Heart left ventricle (tissue), 16 donors: ENCODE measurements at regions of chr4 and their contacts with region 1.

Region 1: GRCh38 chr4:55125087-55125721 is at the start of gene KDR:
- DNase-seq: peak; percentile 49 to 76 (median 69)
- ATAC-seq: peak; percentile 75 to 96 (median 92)
- H3K4me3 ChIP-seq: peak within 1 kb of the TSS; percentile 45 to 87 (median 74)
- H3K27ac ChIP-seq: peak within 1 kb of the TSS; percentile 22 to 86 (median 74)
- H3K4me1 ChIP-seq: peaks cover 0 to 19% (median 5%) of the 10 kb centered on the region in 12 donors
- H3K27me3 ChIP-seq: peaks cover 0 to 28% (median 13%) of the 10 kb centered on the region in 9 donors
- CTCF ChIP-seq: no peak
- POLR2A ChIP-seq: peak in 1 of 2 donors; percentile 94
- total RNA-seq, gene KDR: 13.4 to 51.0 (median 34.5) TPM

Region 2: DNA sequence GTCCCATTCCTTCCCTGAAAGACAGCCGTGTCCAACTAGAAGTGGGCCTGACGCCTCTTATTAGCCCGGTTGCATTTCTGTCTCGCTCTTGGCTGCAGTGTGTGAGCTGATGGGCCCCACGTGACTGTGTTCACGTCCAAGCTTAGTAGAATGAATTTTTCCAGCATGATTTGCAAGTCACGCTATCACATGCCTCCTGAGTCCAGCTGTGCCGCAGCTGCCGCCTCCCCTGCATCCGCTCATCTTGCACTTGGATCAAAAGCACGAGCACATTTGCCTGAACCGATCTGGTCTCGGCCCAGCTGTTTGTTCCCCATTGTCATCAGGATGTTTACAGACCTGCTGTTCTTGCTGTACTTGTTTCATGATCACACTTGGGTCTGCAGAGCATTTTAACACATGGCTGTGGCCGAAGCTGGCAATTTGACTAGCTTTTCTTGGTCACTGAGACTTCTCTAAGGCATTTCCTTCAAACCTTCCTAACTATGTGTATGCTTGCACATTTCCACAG is 341.0 kb before region 1 on chr4:
- intact Hi-C with region 1: no loop called
- DNase-seq: peak; percentile 88 to 93 (median 88)
- ATAC-seq: peak; percentile 94 to 95 (median 94)
- H3K4me3 ChIP-seq: peak overlapping the region in 5 of 12 donors; percentile 2 to 20 (median 12)
- H3K27ac ChIP-seq: peak overlapping the region in 11 of 12 donors; percentile 35 to 90 (median 85)
- H3K4me1 ChIP-seq: peaks cover 0 to 57% (median 42%) of the 10 kb centered on the region in 12 donors
- H3K27me3 ChIP-seq: no peaks in the 10 kb centered on the region
- CTCF ChIP-seq: no peak
- POLR2A ChIP-seq: no peak

Region 3: GRCh38 chr4:54971474-54971950 is 153.7 kb before region 1 on chr4:
- intact Hi-C with region 1: no loop called
- DNase-seq: no peak
- ATAC-seq: peak in 3 of 4 donors; percentile 65 to 85 (median 69)
- H3K4me3 ChIP-seq: no peak overlapping the region
- H3K27ac ChIP-seq: no peak overlapping the region
- H3K4me1 ChIP-seq: peaks cover 0 to 3% (median 0%) of the 10 kb centered on the region in 12 donors
- H3K27me3 ChIP-seq: no peaks in the 10 kb centered on the region
- CTCF ChIP-seq: peak; percentile 58 to 82 (median 74)
- POLR2A ChIP-seq: no peak

Region 4: GRCh38 chr4:55078987-55079386 is 46.2 kb before region 1 on chr4:
- intact Hi-C with region 1: loop called in 1 of 10 experiments (anchors 5 kb)
- DNase-seq: peak; percentile 73 to 81 (median 77)
- ATAC-seq: peak; percentile 64 to 95 (median 85)
- H3K4me3 ChIP-seq: peak overlapping the region in 2 of 12 donors; percentile 5 to 7
- H3K27ac ChIP-seq: peak overlapping the region; percentile 42 to 86 (median 78)
- H3K4me1 ChIP-seq: peaks cover 0 to 28% (median 16%) of the 10 kb centered on the region in 12 donors
- H3K27me3 ChIP-seq: no peaks in the 10 kb centered on the region
- CTCF ChIP-seq: no peak
- POLR2A ChIP-seq: no peak

Region 5: DNA sequence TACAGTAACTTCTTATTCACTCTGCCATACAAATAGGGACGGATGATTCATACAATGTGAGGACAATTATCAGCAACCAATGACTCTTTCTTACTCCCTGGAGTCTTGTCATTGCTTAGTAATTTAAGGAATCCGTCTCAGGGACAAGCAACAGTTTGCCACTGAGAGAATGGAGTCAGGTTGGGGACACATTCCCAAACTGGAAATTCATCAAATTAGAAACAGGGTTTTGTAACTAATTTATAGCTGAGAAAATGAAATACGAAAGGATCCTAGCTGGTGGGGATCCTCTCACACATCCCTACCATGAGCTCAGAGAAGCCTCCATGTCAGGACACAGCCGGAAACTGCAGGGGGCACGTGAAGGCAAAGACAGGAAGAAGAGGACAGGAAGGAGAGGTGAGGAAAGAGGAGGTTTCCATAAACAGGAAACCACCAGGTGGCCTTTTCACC is 50.6 kb after region 1 on chr4:
- intact Hi-C with region 1: loop called in 5 of 10 experiments (anchors 1 to 5 kb)
- DNase-seq: no peak
- ATAC-seq: no peak
- H3K4me3 ChIP-seq: no peak overlapping the region
- H3K27ac ChIP-seq: peak overlapping the region in 5 of 12 donors; percentile 13 to 73 (median 33)
- H3K4me1 ChIP-seq: peaks cover 0 to 28% (median 15%) of the 10 kb centered on the region in 12 donors
- H3K27me3 ChIP-seq: no peaks in the 10 kb centered on the region
- CTCF ChIP-seq: no peak
- POLR2A ChIP-seq: no peak

Region 6: GRCh38 chr4:55312489-55313101 is 187.4 kb after region 1 on chr4:
- intact Hi-C with region 1: loop called in 3 of 10 experiments (anchors 5 to 10 kb)
- DNase-seq: peak in 4 of 5 donors; percentile 45 to 52 (median 50)
- ATAC-seq: peak; percentile 33 to 94 (median 87)
- H3K4me3 ChIP-seq: no peak overlapping the region
- H3K27ac ChIP-seq: peak overlapping the region in 4 of 12 donors; percentile 8 to 27 (median 20)
- H3K4me1 ChIP-seq: peaks cover 0 to 12% (median 0%) of the 10 kb centered on the region in 12 donors
- H3K27me3 ChIP-seq: no peaks in the 10 kb centered on the region
- CTCF ChIP-seq: peak; percentile 53 to 79 (median 64)
- POLR2A ChIP-seq: no peak